Activated CD4-positive, alpha-beta T cell treated with anti-CD3 and anti-CD28 coated beads for 36 hours (primary cell): ENCODE measurements at regions of chr5 and their contacts with region 1.

Region 1: GRCh38 chr5:119411935-119412602 is 40.2 kb upstream of the HSD17B4 start:
- DNase-seq: peak; percentile 66
- ATAC-seq: peak; percentile 78
- H3K4me3 Mint-ChIP-seq: peak overlapping the region; percentile 78
- H3K27ac Mint-ChIP-seq: peak overlapping the region; percentile 93
- H3K4me1 Mint-ChIP-seq: peaks cover 35% of the 10 kb centered on the region
- H3K27me3 Mint-ChIP-seq: no peaks in the 10 kb centered on the region

Region 2: DNA sequence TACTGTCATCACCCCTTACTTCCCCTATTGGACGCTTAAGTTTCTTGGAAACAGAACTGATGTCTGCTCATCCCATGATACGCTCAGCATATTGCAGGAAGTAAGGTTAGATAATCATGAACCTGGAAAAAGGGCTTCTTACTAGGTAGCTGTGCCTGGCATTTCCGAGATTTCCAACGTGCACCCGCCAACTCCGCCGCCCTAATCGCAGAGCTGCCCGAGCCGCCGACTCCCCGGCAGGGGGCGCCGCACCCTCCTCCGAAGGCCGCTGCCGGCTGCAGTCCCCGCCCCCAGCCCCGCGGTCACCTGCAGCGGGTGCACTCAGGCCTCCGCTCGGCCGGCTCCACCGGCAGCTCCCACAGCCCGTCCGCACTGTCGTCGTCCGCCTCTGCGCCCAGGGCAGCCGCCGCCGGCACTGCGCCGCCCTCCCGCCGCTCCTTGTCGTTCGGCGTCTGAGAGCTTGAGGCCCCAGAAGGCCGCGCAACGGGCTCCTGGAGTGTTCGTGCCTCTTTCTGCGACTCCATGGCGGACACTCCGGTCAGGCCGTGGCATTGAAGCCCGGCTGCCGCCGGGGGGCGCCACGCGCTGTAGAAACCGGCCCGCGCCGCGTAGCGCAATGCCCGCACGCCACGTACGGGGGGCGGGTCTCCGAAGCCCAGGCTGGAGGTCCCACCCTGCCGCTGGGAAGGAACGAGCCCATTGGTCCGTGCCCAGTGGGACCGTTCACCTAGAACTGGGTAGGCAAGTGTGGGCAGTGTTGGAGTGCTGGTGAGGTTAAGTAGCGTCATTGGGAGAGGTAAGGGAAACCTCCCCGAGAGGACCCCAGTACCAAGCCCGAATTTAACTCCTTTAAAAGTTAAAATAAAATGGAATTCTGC is 423.8 kb before region 1 on chr5 and contains the start of gene DTWD2:
- CTCF ChIA-PET with region 1: interaction called, 88 read pairs
- POLR2A ChIA-PET with region 1: no interaction called
- intact Hi-C with region 1: loop called (anchors 1 kb)
- DNase-seq: peak; percentile 96
- ATAC-seq: peak; percentile 90
- H3K4me3 Mint-ChIP-seq: peak within 1 kb of the TSS; percentile 63
- H3K27ac Mint-ChIP-seq: peak within 1 kb of the TSS; percentile 34
- H3K4me1 Mint-ChIP-seq: peaks cover 23% of the 10 kb centered on the region
- H3K27me3 Mint-ChIP-seq: peaks cover 1% of the 10 kb centered on the region
- total RNA-seq, gene DTWD2: 3.6 to 4.5 TPM

Region 3: GRCh38 chr5:119238265-119239118 is 173.6 kb before region 1 on chr5:
- CTCF ChIA-PET with region 1: interaction called, 15 read pairs
- POLR2A ChIA-PET with region 1: no interaction called
- intact Hi-C with region 1: no loop called
- DNase-seq: no peak
- ATAC-seq: peak; percentile 85
- H3K4me3 Mint-ChIP-seq: peak overlapping the region; percentile 36
- H3K27ac Mint-ChIP-seq: peak overlapping the region; percentile 68
- H3K4me1 Mint-ChIP-seq: peaks cover 20% of the 10 kb centered on the region
- H3K27me3 Mint-ChIP-seq: no peaks in the 10 kb centered on the region

Region 4: DNA sequence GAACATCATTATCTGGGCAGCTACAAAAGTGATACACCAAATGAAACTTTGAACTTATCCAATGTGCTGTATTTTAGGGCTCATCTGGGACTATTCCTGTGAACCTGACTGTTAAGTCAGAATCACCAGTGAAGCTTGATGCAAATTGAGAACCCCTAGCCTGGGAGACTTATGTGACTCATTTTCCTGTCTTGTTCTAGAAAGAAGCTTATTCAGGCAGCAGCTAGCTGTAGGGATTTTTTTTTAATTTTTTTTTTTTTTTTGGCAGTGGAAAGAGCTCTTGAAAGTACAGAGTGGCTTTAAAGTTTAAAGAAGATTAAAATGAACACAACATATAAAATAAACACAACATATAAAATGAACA is 137.3 kb before region 1 on chr5:
- CTCF ChIA-PET with region 1: interaction called, 11 read pairs
- POLR2A ChIA-PET with region 1: no interaction called
- intact Hi-C with region 1: loop called (anchors 1 to 2 kb)
- DNase-seq: no peak
- ATAC-seq: peak; percentile 65
- H3K4me3 Mint-ChIP-seq: peak overlapping the region; percentile 96
- H3K27ac Mint-ChIP-seq: peak overlapping the region; percentile 96
- H3K4me1 Mint-ChIP-seq: peaks cover 87% of the 10 kb centered on the region
- H3K27me3 Mint-ChIP-seq: no peaks in the 10 kb centered on the region

Region 5: GRCh38 chr5:119322948-119323537 is 89.0 kb before region 1 on chr5:
- CTCF ChIA-PET with region 1: interaction called, 10 read pairs
- POLR2A ChIA-PET with region 1: no interaction called
- intact Hi-C with region 1: no loop called
- DNase-seq: peak; percentile 54
- ATAC-seq: peak; percentile 71
- H3K4me3 Mint-ChIP-seq: peak overlapping the region; percentile 42
- H3K27ac Mint-ChIP-seq: peak overlapping the region; percentile 94
- H3K4me1 Mint-ChIP-seq: peaks cover 96% of the 10 kb centered on the region
- H3K27me3 Mint-ChIP-seq: no peaks in the 10 kb centered on the region

Region 6: DNA sequence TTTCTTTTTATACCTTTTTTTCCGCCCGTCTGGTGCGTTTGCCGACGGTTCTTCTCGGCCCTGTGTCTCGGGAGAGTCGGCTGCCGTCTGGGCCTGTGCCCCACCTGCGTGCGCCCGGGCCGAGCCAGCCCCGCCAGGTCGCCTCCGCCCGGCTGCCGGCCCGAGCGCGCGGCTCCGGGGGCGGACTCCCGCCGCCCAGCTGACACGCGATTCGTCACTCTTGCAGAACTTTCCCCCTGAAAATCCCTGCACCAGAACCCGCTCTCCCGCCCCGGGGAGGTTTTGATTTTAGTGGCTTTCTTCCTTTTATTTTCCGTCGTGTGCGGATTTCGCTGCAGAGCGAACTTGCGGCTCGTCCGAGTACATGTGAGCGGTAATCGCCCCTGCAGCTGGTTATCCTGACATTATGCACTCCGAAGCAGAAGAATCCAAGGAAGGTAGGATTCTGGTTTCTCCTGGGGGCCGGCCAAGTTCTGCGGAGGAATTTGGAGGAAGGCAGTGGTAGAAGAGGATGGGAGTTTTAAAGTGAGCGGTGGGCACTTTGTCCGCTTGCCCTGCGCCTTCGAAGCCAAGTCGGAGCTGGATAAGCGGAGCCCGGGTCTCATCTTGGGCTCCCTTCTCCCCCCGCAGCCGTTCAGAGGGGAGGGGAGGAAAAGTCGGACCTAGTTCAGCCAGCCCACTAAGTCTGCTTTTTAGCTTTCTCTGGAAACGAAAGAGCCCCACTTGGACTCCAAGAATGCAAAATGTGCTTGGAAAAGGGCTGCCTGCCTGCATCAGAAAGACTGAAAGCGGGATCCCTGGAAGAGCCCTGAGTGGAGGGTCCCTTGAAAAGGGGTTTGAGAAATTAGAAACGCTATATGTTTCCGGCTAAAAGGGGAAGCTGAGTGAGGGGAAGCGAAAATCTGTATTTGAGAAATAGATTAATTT is 56.1 kb before region 1 on chr5 and contains the start of gene TNFAIP8:
- CTCF ChIA-PET with region 1: interaction called, 53 read pairs
- POLR2A ChIA-PET with region 1: no interaction called
- intact Hi-C with region 1: no loop called
- DNase-seq: peak; percentile 91
- ATAC-seq: peak; percentile 65
- H3K4me3 Mint-ChIP-seq: peak within 1 kb of the TSS; percentile 98
- H3K27ac Mint-ChIP-seq: peak within 1 kb of the TSS; percentile 99
- H3K4me1 Mint-ChIP-seq: peaks cover 62% of the 10 kb centered on the region
- H3K27me3 Mint-ChIP-seq: no peaks in the 10 kb centered on the region
- total RNA-seq, gene TNFAIP8: 166 to 171 TPM

Region 7: DNA sequence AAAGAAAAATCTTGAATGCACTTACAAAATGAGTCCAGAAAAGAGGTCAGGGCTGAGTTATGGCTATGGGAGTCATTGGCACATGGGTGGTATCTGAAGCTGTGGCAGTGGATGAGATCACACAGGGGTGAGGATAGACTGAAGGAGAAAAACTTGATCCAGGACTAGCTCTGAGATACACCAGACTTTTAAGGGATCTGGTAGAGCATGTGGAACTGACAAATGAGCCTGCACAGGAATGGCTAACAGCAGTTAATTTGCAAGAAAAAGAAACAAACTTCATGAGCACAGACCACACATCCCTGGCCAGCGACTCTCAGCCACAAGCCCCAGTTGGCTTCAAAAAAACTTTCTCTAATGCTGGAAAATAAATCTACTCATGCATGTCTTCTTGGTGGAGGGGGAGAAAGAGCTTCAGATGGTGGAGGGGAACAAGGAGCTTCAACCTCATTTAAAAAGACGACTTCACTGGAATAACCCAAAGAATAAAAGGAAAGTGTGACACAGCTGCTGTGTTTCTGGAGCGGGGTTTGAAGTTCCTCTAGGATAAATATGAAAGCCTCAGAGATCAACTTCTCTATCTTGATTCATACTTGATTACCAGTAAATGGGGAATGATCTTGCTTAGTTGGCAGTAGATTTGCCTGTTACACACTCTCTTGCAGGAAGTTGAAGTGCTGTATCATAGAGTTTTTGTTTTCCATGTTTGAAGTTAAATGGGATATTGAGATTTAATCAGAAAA is 22.6 kb before region 1 on chr5:
- CTCF ChIA-PET with region 1: interaction called, 20 read pairs
- POLR2A ChIA-PET with region 1: interaction called, 3 read pairs
- intact Hi-C with region 1: no loop called
- DNase-seq: no peak
- ATAC-seq: peak; percentile 49
- H3K4me3 Mint-ChIP-seq: no peak overlapping the region
- H3K27ac Mint-ChIP-seq: peak overlapping the region; percentile 72
- H3K4me1 Mint-ChIP-seq: peaks cover 95% of the 10 kb centered on the region
- H3K27me3 Mint-ChIP-seq: no peaks in the 10 kb centered on the region

Region 8: DNA sequence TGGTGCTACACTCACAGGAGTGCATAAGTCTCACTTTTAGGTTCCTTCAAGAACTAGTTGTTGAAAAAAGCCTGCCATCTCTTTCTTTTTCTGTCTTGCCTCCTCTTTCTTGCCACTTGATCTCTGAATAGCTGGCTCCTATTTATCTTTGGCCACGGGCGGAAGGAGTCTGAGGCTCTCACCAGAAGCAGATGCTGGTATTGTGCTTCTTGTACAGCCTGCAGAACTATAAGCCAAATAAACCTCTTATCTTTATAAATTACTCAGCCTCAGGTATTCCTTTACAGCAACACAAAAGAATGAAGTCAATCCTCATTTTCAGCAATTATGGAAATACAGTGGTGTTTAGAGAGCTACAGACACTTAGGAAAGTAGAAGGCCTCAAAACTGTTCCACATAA is 805.0 kb after region 1 on chr5:
- CTCF ChIA-PET with region 1: no interaction called
- POLR2A ChIA-PET with region 1: no interaction called
- intact Hi-C with region 1: no loop called
- DNase-seq: no peak
- ATAC-seq: no peak
- H3K4me3 Mint-ChIP-seq: no peak overlapping the region
- H3K27ac Mint-ChIP-seq: no peak overlapping the region
- H3K4me1 Mint-ChIP-seq: no peaks in the 10 kb centered on the region
- H3K27me3 Mint-ChIP-seq: no peaks in the 10 kb centered on the region